Dorsolateral prefrontal cortex (tissue), 120 donors: ENCODE measurements at regions of chr1 and their contacts with region 1.

Region 1: DNA sequence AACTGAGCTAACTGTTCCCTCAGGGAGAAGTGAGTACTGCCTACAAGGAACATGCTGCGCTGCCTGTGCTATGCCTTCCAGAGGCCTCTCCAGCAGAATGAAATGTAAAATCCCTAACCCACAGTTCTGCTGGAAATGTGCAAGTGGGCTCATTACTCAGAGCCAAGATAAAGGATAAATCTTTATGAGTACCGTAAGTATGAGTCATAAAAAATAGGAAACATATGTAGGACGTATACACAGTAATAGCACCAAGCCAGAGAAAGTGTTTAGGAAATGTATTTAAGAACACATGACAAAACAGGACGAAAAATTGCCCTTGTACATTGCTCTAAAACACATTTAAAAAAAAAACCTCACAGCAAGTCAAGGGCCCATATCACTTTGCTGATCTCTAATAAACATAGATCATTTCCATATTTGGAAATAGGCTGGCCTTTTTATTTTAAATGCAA is 104.6 kb downstream of the TGFBR3 start:
- DNase-seq: peak in 2 of 10 donors; percentile 15 to 51
- H3K4me3 ChIP-seq: no peak overlapping the region
- H3K27ac ChIP-seq: peak overlapping the region in 26 of 59 donors; percentile 2 to 74 (median 46)
- H3K27me3 ChIP-seq: peaks cover 0 to 3% (median 0%) of the 10 kb centered on the region in 45 donors
- CTCF ChIP-seq: no peak

Region 2: GRCh38 chr1:91669584-91670350 is 111.6 kb before region 1 on chr1:
- intact Hi-C with region 1: no loop called
- DNase-seq: no peak
- H3K4me3 ChIP-seq: no peak overlapping the region
- H3K27ac ChIP-seq: no peak overlapping the region
- H3K27me3 ChIP-seq: peaks cover 0 to 7% (median 0%) of the 10 kb centered on the region in 45 donors
- CTCF ChIP-seq: no peak

Region 3: DNA sequence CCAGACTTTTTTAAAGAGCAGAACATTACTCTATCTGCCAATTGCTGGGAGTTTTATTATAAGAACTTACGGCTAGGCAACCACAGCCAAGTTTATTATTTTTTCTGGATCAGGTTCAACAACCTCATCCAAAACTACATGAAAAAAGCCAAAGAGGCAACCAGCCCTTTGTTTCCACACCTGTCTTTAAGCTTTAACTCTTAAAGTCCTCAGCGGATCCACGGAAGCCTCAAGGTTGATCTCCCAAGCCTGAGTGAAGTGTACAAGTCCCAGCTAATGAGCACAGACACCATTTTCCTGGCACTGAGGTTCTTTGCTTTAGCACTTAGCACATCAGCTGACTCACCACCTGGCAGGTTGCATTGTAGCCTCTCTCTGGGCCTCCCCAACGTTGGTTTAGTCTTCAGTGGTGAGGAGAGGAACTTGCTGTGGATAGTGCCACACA is 38.5 kb before region 1 on chr1:
- intact Hi-C with region 1: loop called in 1 of 2 experiments (anchors 5 kb)
- DNase-seq: no peak
- H3K4me3 ChIP-seq: no peak overlapping the region
- H3K27ac ChIP-seq: no peak overlapping the region
- H3K27me3 ChIP-seq: no peaks in the 10 kb centered on the region
- CTCF ChIP-seq: no peak